MCF 10A (cell line): ENCODE measurements at regions of chr2 and their contacts with region 1.

Region 1: DNA sequence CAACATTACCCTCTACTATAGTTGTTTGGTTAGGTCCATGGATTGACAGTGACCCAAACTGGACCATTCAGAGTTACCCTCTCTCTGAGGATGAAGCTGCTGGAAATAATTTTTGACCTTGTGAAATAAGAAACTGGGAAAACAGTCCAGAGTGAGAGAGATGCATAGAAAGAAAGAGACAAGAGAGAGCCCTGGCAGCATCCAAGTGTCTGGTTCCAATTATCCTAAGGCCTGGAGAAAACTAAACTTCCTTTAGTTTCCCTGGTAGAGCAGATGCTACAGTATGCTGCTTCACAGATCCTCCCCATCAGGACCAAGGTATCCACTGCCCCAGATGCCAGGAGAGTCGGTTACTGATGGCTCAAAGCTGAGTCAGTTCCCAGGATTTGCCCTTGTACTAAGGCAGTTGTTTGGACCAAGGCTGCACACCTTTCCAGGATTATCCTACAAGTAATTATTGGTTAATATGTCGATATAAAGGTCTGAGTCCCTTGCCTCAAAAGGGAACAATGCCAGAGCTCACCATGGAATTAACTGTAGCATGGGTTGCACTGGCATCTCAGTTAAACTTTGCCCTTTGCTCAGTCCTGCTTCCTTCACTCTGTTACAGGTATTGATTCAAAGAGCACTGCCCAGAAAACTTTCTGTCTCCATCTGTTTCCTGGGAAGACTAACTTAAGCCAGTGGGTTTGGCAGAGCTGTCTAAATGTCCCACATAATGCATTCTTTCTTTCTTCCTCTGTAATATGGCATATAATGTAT is 14.6 kb upstream of the CHN1 start:
- DNase-seq: no peak
- H3K4me3 Mint-ChIP-seq: no peak overlapping the region
- H3K27ac Mint-ChIP-seq: no peak overlapping the region
- H3K4me1 Mint-ChIP-seq: no peaks in the 10 kb centered on the region
- H3K27me3 Mint-ChIP-seq: no peaks in the 10 kb centered on the region
- CTCF ChIP-seq: no peak

Region 2: DNA sequence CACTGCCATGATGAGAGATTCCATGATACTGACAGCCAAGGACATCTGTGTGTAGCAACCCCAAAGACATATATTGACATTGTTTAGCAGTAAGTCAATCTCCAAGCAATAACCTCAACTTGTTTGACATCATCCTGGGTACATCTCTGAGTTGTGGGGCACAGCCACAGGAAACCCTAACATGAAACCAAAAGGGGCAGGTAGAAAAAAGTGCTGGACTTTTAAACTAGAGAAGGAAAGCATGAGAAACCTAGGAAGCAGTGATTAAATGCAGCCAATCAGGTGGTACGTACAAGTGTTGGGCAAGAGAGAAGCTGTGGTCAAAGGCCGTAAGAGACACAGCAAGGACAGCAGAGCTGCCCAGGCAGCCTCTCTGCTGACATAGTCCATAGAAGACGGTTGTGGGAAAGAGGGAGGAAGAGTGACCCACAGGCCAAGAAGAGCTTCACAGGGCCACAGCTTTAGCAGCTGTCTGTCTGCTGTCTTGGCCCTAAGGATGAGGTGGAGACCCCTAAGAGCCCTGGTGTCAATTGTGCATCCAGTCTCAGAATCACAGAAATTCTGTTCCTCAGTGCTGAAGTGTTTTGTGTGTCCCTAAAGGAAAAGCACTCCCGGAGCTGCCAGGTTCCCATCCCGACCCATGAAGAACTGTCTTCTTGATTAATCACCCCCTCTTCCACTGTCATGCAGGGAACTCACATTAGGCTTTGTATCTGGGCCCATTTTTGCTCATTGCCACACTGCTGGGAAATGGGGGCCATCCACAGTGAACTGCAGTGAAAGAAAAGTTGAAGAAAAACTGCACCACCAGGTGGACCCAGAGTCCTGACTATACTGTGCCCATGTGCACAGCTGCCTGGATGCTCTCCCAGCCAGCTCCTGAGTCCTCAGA is 10.9 kb after region 1 on chr2:
- CTCF ChIA-PET with region 1: interaction called, 12 read pairs
- POLR2A ChIA-PET with region 1: interaction called, 3 read pairs
- intact Hi-C with region 1: no loop called
- DNase-seq: peak; percentile 49
- H3K4me3 Mint-ChIP-seq: no peak overlapping the region
- H3K27ac Mint-ChIP-seq: no peak overlapping the region
- H3K4me1 Mint-ChIP-seq: no peaks in the 10 kb centered on the region
- H3K27me3 Mint-ChIP-seq: no peaks in the 10 kb centered on the region
- CTCF ChIP-seq: peak; percentile 28